ENCODE measurements at regions of chr12 and their contacts with region 1.

Region 1: GRCh38 chr12:9760699-9761418 is at the start of gene CD69:
- DNase-seq: peak; percentile 87
- ATAC-seq: peak; percentile 55
- H3K4me3 Mint-ChIP-seq: peak within 1 kb of the TSS; percentile 99
- H3K27ac Mint-ChIP-seq: peak within 1 kb of the TSS; percentile 100
- H3K4me1 Mint-ChIP-seq: peaks cover 49% of the 10 kb centered on the region
- H3K27me3 Mint-ChIP-seq: no peaks in the 10 kb centered on the region
- total RNA-seq, gene CD69: 97.9 to 127 TPM

Region 2: DNA sequence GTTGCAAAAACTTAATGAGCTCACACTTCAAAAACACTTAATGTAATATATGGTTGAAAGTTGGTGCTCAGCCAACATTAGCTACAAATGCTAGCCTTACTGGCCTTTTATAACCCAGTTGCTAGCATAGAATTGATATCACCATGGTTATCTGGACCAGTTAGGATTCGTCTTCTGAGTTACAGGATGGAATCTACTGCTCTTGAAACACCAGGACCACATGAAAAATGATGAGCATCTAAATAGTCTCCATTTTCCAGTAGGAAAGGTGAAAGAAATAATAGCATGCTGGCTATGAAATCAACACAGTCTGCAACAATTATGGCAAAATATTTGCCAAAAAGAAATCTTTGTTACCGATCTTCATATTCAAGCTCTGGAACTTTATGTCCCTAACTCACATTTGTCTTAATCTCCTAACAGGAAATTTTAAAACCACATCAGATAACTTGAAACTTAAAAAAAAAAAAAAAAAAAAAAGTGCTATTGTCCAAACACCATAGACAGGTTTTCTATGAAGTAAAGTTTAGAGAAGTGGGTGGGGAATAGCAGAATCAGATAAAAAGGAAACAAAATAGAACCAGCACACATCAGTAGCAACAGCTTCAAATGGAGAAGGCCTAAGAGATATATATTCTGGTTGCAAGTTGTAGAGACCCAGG is 12.5 kb after region 1 on chr12:
- CTCF ChIA-PET with region 1: interaction called, 5 read pairs
- POLR2A ChIA-PET with region 1: interaction called, 12 read pairs
- intact Hi-C with region 1: no loop called
- DNase-seq: no peak
- ATAC-seq: no peak
- H3K4me3 Mint-ChIP-seq: peak overlapping the region; percentile 52
- H3K27ac Mint-ChIP-seq: peak overlapping the region; percentile 75
- H3K4me1 Mint-ChIP-seq: peaks cover 88% of the 10 kb centered on the region
- H3K27me3 Mint-ChIP-seq: no peaks in the 10 kb centered on the region

Region 3: GRCh38 chr12:9797722-9798619 is 37.1 kb after region 1 on chr12:
- CTCF ChIA-PET with region 1: interaction called, 804 read pairs
- POLR2A ChIA-PET with region 1: interaction called, 191 read pairs
- intact Hi-C with region 1: loop called in 1 of 2 experiments (anchors 1 kb)
- DNase-seq: peak; percentile 81
- ATAC-seq: peak; percentile 84
- H3K4me3 Mint-ChIP-seq: peak overlapping the region; percentile 72
- H3K27ac Mint-ChIP-seq: peak overlapping the region; percentile 92
- H3K4me1 Mint-ChIP-seq: peaks cover 42% of the 10 kb centered on the region
- H3K27me3 Mint-ChIP-seq: no peaks in the 10 kb centered on the region

Region 4: GRCh38 chr12:10175846-10176636 is 415.2 kb after region 1 on chr12:
- CTCF ChIA-PET with region 1: no interaction called
- POLR2A ChIA-PET with region 1: no interaction called
- intact Hi-C with region 1: no loop called
- DNase-seq: no peak
- ATAC-seq: no peak
- H3K4me3 Mint-ChIP-seq: no peak overlapping the region
- H3K27ac Mint-ChIP-seq: no peak overlapping the region
- H3K4me1 Mint-ChIP-seq: no peaks in the 10 kb centered on the region
- H3K27me3 Mint-ChIP-seq: peaks cover 19% of the 10 kb centered on the region